A549 (cell line): ENCODE measurements at regions of chr19 and their contacts with region 1.

Region 1: DNA sequence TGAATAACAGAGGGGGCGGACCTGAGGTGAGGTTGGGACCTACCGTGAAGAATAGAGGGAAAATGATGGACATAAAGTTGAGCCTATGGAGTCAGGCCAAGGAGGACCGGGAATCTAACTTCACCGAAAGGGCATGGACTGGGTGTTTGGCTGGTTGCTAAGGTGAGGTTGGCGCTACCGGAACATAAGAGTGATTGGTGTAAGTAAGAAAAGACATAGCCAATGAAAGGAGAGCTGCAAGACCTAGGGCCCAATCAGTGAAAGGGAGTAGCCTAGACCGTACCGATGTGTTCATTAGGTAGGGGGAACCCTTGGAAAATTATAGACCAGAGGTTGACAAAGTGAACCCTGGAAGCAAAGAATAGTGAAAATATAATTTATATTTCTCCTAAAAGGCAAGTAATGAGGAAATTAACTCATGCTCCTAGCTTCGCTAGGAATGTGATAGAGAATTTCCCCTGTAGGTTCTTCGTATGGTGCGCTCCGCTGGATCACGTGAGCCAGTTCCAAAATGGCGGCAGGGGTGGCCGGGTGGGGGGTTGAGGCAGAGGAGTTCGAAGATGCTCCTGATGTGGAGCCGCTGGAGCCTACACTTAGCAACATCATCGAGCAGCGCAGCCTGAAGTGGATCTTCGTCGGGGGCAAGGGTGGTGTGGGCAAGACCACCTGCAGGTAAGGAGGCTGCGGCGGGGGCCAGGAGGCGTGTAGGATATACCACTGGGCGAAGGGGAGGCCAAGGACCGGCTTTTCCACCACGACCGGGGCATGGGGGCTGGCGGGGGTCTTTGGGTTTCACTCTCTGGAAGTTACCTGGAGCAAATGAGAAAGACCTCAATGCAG is at the start of gene GET3:
- DNase-seq: peak; percentile 97 to 100
- ATAC-seq: peak; percentile 92 to 94
- H3K4me3 ChIP-seq: peak within 1 kb of the TSS; percentile 78
- H3K27ac ChIP-seq: peak within 1 kb of the TSS; percentile 86 to 99
- H3K4me1 ChIP-seq: peaks cover 25% of the 10 kb centered on the region
- CTCF ChIP-seq: no peak
- EP300 ChIP-seq: no peak
- POLR2A ChIP-seq: peak; percentile 86
- RAD21 ChIP-seq: no peak
- polyA plus RNA-seq, gene GET3: 84.9 and 87.0 TPM in 2 replicates

Region 2: DNA sequence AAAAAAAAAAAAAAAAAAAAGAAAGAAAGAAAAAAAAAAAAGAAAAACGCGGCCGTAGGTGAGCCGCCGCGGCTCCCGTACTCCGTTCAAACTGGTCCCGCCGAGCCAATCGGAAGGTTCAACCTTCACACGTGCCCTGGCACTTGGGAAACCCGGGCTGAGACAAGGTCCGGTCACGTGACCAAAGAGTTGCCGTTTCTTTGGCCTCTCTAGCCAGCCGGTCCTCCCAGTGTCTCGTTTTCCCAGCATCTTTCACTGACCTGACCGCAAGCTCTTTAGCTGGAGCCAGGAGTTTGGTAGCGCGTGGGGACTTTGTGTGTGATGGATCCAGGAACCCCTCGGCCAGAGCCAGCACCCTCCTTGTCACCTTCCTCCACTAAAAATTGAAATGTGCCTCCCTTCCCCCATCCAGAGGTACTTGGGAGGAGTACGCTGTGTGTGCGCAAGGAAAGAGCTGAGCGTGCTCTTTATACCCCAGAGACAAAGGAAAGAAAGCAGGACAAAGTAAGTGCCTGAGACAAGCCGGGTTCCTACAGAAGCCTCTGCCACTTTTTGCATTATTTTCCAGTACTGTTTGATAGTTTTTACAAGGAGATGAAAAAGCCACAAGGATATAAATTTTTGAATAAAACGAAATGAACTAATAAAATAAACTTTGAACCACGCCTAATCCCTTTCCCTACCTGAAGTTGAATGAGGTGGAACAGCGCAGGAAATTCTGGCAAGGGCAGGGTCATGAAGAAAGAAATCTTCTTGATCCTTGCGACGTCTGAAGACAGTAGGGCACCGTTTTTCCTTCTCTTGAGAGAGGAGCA is 14.4 kb before region 1 on chr19:
- CTCF ChIA-PET with region 1: interaction called, 8 read pairs
- POLR2A ChIA-PET with region 1: interaction called, 16 read pairs
- DNase-seq: peak; percentile 96 to 99
- ATAC-seq: peak; percentile 86 to 90
- H3K4me3 ChIP-seq: peak overlapping the region; percentile 76
- H3K27ac ChIP-seq: peak overlapping the region; percentile 91 to 99
- H3K4me1 ChIP-seq: peaks cover 10% of the 10 kb centered on the region; the same call in 1 of the 3 replicates
- CTCF ChIP-seq: no peak
- EP300 ChIP-seq: no peak
- POLR2A ChIP-seq: peak; percentile 38; the same call in 1 of the 2 replicates
- RAD21 ChIP-seq: no peak

Region 3: DNA sequence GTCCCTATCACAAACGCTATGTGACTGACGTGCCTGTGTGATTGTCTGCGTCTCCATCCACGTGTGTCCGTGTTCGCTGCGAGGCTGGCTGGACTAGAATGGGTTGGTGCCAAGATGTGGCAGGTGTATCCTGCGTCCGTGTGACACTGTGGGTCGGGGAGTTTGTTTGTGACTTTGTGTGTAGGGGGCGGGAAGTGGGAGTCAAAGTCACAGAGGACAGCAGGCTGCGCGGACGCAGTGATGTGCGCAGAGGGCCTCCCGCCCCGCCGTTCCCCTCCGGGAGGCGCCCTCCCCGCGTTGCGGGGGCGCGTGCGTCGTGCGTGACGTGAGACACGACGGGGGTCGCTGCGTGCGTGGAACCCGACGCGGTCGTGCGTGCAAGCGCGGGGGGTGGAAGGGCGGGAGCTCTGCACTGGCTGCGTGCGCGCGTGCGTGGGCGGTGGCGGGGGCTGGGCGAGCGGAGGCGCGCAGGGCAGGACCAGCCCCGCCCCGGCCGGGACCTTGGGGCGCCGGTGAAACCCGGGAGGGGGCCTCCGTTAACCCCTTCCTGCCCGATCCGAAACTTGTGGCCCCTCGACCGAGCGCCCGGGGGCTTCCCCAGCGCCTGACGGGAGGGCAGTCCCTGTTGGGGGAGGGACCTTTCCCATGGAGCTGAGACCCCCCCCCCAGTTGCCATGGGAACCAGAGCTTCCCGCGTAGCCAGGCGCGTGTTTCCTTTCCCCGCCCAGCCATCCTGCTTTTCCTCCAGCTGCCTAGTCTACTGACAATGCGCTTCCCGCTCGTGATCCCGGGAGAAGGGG is 45.2 kb after region 1 on chr19:
- CTCF ChIA-PET with region 1: interaction called, 725 read pairs
- POLR2A ChIA-PET with region 1: interaction called, 3 read pairs
- DNase-seq: peak in 1 of 2 experiments; percentile 81
- ATAC-seq: peak; percentile 21 to 23; a peak in 4 of 6 replicates
- H3K4me3 ChIP-seq: peak overlapping the region; percentile 44
- H3K27ac ChIP-seq: peak overlapping the region; percentile 96 to 99
- H3K4me1 ChIP-seq: peaks cover 70% of the 10 kb centered on the region
- CTCF ChIP-seq: no peak
- EP300 ChIP-seq: no peak; a peak in 1 of 5 replicates
- POLR2A ChIP-seq: no peak
- RAD21 ChIP-seq: no peak

Region 4: DNA sequence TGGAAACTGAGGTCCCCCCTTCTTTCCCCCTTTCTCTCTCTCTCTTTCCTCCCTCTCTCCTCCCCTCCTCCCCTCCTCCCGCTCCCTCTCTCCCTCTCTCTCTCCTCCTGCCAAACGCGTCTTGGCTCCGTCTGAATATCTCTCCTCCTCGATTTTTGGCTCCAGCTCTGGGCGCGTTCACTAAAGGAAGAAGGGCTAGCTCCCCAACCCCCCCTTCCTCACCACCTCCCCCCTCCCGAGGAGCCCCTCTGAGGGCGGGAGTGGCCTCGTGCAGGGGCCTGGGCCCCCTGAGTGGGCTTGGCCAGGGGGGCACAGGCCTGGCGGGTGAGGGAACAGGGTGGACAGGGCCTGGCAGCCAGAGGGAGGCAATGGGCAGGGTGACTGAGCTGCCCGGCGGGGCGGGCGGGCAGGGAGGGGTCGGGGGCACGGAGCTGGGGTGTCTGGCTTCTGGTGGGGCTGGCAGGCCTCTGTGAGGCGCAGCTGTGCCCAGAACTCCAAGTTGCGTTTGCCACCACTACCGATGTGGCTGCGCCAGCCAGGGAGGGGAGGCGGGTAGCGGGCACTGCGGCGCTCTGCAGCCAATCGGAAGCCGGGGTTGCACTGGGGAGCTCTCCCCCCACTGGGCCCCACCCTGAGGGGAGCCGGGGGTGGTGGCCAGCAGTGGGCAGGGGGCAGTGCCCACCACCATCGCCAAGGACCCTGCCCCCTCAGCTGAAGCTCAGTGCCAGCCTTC is 265.1 kb after region 1 on chr19:
- CTCF ChIA-PET with region 1: no interaction called
- POLR2A ChIA-PET with region 1: no interaction called
- DNase-seq: no peak
- ATAC-seq: no peak
- H3K4me3 ChIP-seq: no peak overlapping the region
- H3K27ac ChIP-seq: no peak overlapping the region
- H3K4me1 ChIP-seq: no peaks in the 10 kb centered on the region
- CTCF ChIP-seq: no peak
- EP300 ChIP-seq: no peak
- POLR2A ChIP-seq: no peak
- RAD21 ChIP-seq: no peak